HepG2 (cell line): ENCODE measurements at regions of chr20 and their contacts with region 1.

Region 1: DNA sequence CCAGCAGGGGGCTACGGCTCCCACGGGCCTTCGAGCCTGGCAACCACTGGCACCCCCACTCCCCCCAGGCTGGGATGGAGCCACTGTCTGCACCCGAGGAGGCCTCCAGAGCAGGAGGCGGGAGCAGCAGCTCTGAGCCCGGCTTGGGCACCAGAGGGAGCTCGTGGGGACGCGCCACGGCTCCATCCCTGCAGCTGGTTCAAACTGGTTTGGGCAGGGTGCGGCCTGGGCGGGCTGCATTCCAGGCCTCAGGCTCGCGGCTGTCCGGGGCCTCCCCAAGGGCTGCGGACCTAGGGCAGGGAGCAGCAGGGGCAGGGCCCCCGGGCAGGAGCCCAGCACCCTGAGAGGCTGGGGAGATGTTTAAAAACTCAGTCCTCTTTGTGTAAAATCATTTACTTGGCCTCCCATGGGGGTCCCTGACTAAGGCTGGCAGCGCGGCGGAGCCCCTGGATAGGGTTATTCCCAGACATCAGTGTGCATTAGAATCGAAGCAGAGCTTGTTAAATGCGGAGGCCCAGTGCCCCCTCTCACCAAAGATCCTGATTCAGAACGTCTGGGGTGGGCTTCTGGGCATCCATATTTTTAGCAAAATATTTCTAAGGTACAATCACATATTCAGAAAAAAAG is 4.1 kb upstream of the BCAS4 start:
- DNase-seq: peak; percentile 88
- ATAC-seq: peak; percentile 85
- H3K4me3 ChIP-seq: peak overlapping the region; percentile 44 to 69 (median 46); a peak in 5 of 6 replicates
- H3K27ac ChIP-seq: peak overlapping the region; percentile 42
- H3K4me1 ChIP-seq: peaks cover 59% of the 10 kb centered on the region
- H3K27me3 ChIP-seq: no peaks in the 10 kb centered on the region
- CTCF ChIP-seq: peak; percentile 99
- EP300 ChIP-seq: peak; percentile 48 to 72; a peak in 2 of 4 replicates
- POLR2A ChIP-seq: peak; percentile 73 to 74
- RAD21 ChIP-seq: peak; percentile 90

Region 2: GRCh38 chr20:50663095-50663850 is 127.5 kb before region 1 on chr20:
- CTCF ChIA-PET with region 1: no interaction called
- POLR2A ChIA-PET with region 1: interaction called, 7 read pairs
- in situ Hi-C with region 1: no loop called
- intact Hi-C with region 1: loop called (anchors 1 kb)
- DNase-seq: peak; percentile 84
- ATAC-seq: peak; percentile 74
- H3K4me3 ChIP-seq: peak overlapping the region in 1 of 3 experiments; percentile 55; a peak in 2 of 6 replicates
- H3K27ac ChIP-seq: no peak overlapping the region
- H3K4me1 ChIP-seq: peaks cover 88% of the 10 kb centered on the region
- H3K27me3 ChIP-seq: peaks cover 2 to 14% of the 10 kb centered on the region in 2 experiments; a peak in 1 of 5 replicates
- CTCF ChIP-seq: peak; percentile 83
- EP300 ChIP-seq: no peak
- POLR2A ChIP-seq: no peak
- RAD21 ChIP-seq: peak; percentile 87

Region 3: DNA sequence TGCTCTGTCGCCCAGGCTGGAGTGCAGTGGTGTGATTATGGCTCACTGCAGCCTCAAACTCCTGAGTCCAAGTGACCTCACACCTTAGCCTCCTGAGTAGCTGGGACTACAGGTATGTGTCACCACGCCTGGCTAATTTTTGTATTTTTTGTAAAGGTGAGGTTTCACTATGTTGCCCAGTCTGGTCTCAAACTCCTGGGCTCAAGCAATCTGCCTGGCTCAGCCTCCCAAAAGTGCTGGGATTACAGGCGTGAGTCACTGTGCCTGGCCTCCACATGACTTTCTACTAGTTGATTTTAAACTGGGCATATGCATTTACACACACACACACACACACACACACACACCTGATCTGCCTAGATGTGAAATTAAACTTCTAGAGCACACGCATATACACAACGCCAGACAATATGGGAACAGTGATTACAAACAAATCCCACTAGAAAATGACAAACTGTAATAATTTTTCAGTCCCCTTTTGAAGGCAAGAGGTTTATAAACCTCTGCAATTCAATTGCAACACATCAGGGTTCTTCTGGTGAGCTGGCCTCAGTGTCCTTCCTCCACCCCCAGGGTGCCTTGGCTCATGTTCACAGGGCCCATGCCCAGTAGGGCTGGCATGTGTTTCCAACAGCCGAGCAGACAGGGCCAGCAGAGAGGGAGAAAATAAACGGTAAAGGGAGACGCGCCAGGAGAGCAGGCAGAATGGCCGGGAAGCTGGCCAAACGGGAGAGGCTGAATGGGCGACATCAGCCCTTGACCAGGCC is 28.1 kb before region 1 on chr20:
- CTCF ChIA-PET with region 1: interaction called, 3 read pairs
- POLR2A ChIA-PET with region 1: interaction called, 18 read pairs
- in situ Hi-C with region 1: no loop called
- intact Hi-C with region 1: loop called (anchors 1 kb)
- DNase-seq: peak; percentile 34
- ATAC-seq: no peak
- H3K4me3 ChIP-seq: no peak overlapping the region
- H3K27ac ChIP-seq: peak overlapping the region; percentile 66
- H3K4me1 ChIP-seq: peaks cover 73% of the 10 kb centered on the region
- H3K27me3 ChIP-seq: no peaks in the 10 kb centered on the region
- CTCF ChIP-seq: no peak
- EP300 ChIP-seq: no peak
- POLR2A ChIP-seq: no peak
- RAD21 ChIP-seq: no peak

Region 4: DNA sequence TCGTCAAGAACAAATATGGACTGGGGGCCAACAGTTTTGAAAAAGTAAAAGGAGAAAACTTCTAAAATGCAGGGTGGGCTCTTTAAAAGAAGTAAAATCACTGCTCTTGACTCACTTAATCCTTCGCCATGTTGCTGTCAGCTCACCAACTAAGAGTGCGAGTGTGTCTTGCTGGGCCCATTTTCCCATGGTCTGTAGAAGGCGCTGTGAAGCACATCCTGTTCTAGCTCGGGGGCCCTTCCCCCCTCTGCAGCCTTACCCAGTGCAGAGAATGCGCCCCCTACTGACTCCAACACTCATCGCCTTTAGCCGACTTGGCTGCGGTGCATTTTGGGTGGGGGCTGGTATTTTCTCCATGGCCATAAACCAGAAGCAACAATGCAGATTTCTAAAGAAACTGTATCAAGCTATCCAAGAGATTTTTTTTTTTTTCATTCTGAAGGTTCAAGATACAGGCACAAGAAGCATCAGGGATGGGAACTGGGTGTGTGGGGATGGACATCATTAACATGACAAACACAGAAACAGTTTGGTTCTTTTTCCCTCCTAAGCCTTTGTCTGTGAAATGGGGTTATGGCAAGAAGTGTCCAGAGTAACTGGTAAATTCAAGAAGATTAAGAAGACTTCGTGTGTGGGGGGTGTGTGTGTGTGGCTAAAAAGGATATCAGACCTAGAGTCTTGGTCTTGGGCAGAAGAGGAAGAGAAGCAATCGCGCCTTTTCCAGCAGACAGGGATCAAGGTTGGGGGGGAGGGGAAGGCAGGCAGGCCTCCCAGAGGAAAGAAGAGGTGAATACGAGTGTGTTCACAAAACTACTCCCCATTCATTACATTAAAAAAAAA is 138.8 kb after region 1 on chr20:
- CTCF ChIA-PET with region 1: interaction called, 62 read pairs
- POLR2A ChIA-PET with region 1: interaction called, 29 read pairs
- in situ Hi-C with region 1: loop called (anchors 10 kb)
- intact Hi-C with region 1: loop called (anchors 1 kb)
- DNase-seq: peak; percentile 97
- ATAC-seq: peak; percentile 87
- H3K4me3 ChIP-seq: peak overlapping the region; percentile 82 to 97 (median 96)
- H3K27ac ChIP-seq: peak overlapping the region; percentile 73
- H3K4me1 ChIP-seq: peaks cover 40% of the 10 kb centered on the region
- H3K27me3 ChIP-seq: no peaks in the 10 kb centered on the region
- CTCF ChIP-seq: peak; percentile 99
- EP300 ChIP-seq: peak; percentile 63 to 94
- POLR2A ChIP-seq: peak in 1 of 2 experiments; percentile 43; a peak in 1 of 4 replicates
- RAD21 ChIP-seq: peak; percentile 96

Region 5: GRCh38 chr20:50980851-50981713 is 190.3 kb after region 1 on chr20:
- CTCF ChIA-PET with region 1: interaction called, 12 read pairs
- POLR2A ChIA-PET with region 1: no interaction called
- in situ Hi-C with region 1: no loop called
- intact Hi-C with region 1: loop called (anchors 5 kb)
- DNase-seq: peak; percentile 79
- ATAC-seq: peak; percentile 63
- H3K4me3 ChIP-seq: peak overlapping the region in 1 of 3 experiments; percentile 9; a peak in 1 of 6 replicates
- H3K27ac ChIP-seq: no peak overlapping the region
- H3K4me1 ChIP-seq: peaks cover 41% of the 10 kb centered on the region
- H3K27me3 ChIP-seq: peaks cover 9 to 44% of the 10 kb centered on the region in 2 experiments; a peak in 4 of 5 replicates
- CTCF ChIP-seq: peak; percentile 80
- EP300 ChIP-seq: no peak
- POLR2A ChIP-seq: no peak
- RAD21 ChIP-seq: peak; percentile 30; the same call in 1 of the 2 replicates